Posterior cingulate gyrus (tissue), 11 donors: ENCODE measurements at regions of chr6 and their contacts with region 1.

Region 1: DNA sequence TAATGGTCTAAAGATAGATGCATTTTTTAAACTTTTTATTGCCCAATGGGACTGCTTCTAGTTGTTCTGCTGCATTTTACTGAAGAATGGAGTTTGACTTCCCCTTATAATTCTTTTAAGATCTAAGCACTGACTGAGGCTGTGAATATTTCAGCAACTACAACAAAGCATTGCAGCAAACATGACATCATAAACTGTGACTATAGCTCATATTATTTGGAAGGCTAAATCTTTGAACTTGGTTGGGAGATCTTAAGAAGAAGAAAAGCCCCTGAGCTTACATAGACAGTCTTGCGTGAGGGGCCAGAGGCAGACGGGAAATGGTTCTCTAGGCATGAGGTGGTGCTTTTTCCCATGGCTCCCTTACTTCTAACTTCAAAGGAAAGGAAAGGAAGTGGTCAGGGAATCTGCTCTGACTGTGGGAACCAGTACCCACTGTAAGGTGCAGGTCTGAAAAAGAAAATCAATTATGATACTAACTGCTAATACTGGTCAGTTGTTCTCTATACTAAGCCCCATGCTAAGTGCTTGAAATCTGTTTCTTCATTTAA is 14.8 kb downstream of the HEY2 start:
- DNase-seq: no peak

Region 2: DNA sequence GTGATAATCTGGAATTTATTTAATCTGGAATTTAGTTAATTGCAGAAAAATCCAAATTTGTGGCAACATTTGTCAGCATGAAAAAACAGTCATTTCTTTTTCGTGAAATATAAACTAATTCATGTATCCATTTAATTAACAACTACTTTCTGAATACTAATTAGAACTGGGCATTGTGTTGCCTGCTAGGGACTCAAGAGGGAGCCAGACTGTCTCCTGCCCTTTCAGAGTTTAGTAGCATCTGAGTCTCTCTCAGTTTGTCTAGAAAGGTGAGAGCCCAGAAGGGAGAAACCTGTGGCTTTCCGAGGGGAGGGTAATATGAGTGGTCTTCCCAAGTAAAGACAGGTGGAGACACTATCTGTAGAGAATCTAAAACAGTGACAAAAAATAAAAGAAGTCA is 251.6 kb before region 1 on chr6:
- intact Hi-C with region 1: loop called (anchors 10 kb)
- DNase-seq: no peak